Natural killer cell (primary cell): ENCODE measurements at regions of chr5 and their contacts with region 1.

Region 1: GRCh38 chr5:172860520-172861443 is 26.7 kb downstream of the ERGIC1 start:
- DNase-seq: no peak
- ATAC-seq: peak in 1 of 3 donors; percentile 5
- H3K4me3 ChIP-seq: no peak overlapping the region
- H3K4me3 Mint-ChIP-seq: peak overlapping the region; percentile 60
- H3K27ac ChIP-seq: no peak overlapping the region
- H3K27ac Mint-ChIP-seq: peak overlapping the region; percentile 69 to 71
- H3K4me1 ChIP-seq: peaks cover 42% of the 10 kb centered on the region
- H3K4me1 Mint-ChIP-seq: peaks cover 51 to 67% of the 10 kb centered on the region in 2 donors
- H3K27me3 ChIP-seq: no peaks in the 10 kb centered on the region
- H3K27me3 Mint-ChIP-seq: no peaks in the 10 kb centered on the region
- CTCF ChIP-seq: no peak

Region 2: GRCh38 chr5:172904643-172905347 is 44.0 kb after region 1 on chr5:
- intact Hi-C with region 1: loop called (anchors 5 kb)
- DNase-seq: no peak
- ATAC-seq: no peak
- H3K4me3 ChIP-seq: no peak overlapping the region
- H3K4me3 Mint-ChIP-seq: no peak overlapping the region
- H3K27ac ChIP-seq: no peak overlapping the region
- H3K27ac Mint-ChIP-seq: no peak overlapping the region
- H3K4me1 ChIP-seq: peaks cover 7% of the 10 kb centered on the region
- H3K4me1 Mint-ChIP-seq: peaks cover 10 to 14% of the 10 kb centered on the region in 2 donors
- H3K27me3 ChIP-seq: no peaks in the 10 kb centered on the region
- H3K27me3 Mint-ChIP-seq: no peaks in the 10 kb centered on the region
- CTCF ChIP-seq: no peak

Region 3: GRCh38 chr5:173764321-173765029 is 903.7 kb after region 1 on chr5:
- intact Hi-C with region 1: no loop called
- DNase-seq: no peak
- ATAC-seq: no peak
- H3K4me3 ChIP-seq: no peak overlapping the region
- H3K4me3 Mint-ChIP-seq: no peak overlapping the region
- H3K27ac ChIP-seq: no peak overlapping the region
- H3K27ac Mint-ChIP-seq: no peak overlapping the region
- H3K4me1 ChIP-seq: no peaks in the 10 kb centered on the region
- H3K4me1 Mint-ChIP-seq: no peaks in the 10 kb centered on the region
- H3K27me3 ChIP-seq: no peaks in the 10 kb centered on the region
- H3K27me3 Mint-ChIP-seq: peaks cover 7 to 11% of the 10 kb centered on the region in 2 donors
- CTCF ChIP-seq: no peak

Region 4: GRCh38 chr5:174371595-174372128 is 1510.9 kb after region 1 on chr5:
- intact Hi-C with region 1: no loop called
- DNase-seq: no peak
- ATAC-seq: no peak
- H3K4me3 ChIP-seq: no peak overlapping the region
- H3K4me3 Mint-ChIP-seq: no peak overlapping the region
- H3K27ac ChIP-seq: no peak overlapping the region
- H3K27ac Mint-ChIP-seq: no peak overlapping the region
- H3K4me1 ChIP-seq: no peaks in the 10 kb centered on the region
- H3K4me1 Mint-ChIP-seq: no peaks in the 10 kb centered on the region
- H3K27me3 ChIP-seq: no peaks in the 10 kb centered on the region
- H3K27me3 Mint-ChIP-seq: peaks cover 0 to 3% of the 10 kb centered on the region in 2 donors
- CTCF ChIP-seq: no peak